ENCODE measurements at regions of chr9 and their contacts with region 1.

Region 1: GRCh38 chr9:36407122-36407723 is 7.2 kb upstream of the RNF38 start:
- DNase-seq: peak; percentile 37
- H3K4me3 Mint-ChIP-seq: no peak overlapping the region
- H3K27ac Mint-ChIP-seq: peak overlapping the region; percentile 27
- H3K4me1 Mint-ChIP-seq: peaks cover 4% of the 10 kb centered on the region
- H3K27me3 Mint-ChIP-seq: no peaks in the 10 kb centered on the region

Region 2: GRCh38 chr9:36450110-36450732 is 43.0 kb after region 1 on chr9:
- intact Hi-C with region 1: loop called (anchors 1 kb)
- DNase-seq: no peak
- H3K4me3 Mint-ChIP-seq: no peak overlapping the region
- H3K27ac Mint-ChIP-seq: no peak overlapping the region
- H3K4me1 Mint-ChIP-seq: peaks cover 8% of the 10 kb centered on the region
- H3K27me3 Mint-ChIP-seq: no peaks in the 10 kb centered on the region